Mammary epithelial cell (primary cell): ENCODE measurements at regions of chr6 and their contacts with region 1.

Region 1: DNA sequence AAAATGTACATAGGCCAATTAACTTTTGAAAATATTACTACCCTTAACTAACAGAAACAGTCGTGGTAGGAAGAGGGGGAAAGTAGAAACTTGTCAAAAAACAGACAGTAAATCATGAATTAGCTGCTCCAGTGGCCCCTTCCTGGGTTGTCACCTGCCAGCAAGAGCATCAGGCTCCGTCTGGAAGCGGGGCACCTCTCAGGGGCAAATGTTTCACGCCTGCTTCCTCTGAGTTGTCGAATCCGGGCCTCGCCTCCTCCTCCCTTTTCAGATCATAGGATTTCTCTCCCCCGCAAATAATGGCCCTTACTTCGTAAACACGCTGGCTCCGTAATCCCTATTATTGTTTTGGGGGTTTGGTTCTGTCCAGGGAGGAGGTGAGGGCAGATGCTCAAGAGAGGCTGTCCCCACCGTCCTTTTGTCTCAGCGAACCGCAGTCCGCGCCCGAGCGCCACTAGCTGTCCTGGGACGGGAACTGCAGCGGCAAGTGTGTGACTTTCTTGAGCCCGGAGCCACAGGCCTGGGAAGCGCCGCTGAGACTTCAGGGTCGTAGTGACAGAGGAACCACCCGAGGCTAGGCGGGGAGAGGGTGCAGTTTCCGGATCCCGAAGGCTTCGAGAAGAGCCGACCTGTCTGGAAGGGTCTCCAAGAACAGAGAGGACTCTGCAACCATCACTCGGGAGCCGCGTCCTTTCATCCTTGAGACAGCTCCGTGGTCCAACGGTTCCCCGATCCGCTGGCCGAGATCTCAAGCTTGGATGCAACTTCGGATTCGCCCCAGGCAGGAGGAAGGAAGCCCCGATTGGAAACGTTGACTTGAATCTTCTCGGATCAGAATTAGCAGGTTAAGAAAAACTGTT is 214.5 kb upstream of the ZNF184 start:
- DNase-seq: peak; percentile 76
- H3K4me3 ChIP-seq: peak overlapping the region; percentile 65 to 67 (median 66)
- H3K27ac ChIP-seq: no peak overlapping the region
- H3K4me1 ChIP-seq: peaks cover 5% of the 10 kb centered on the region
- H3K27me3 ChIP-seq: no peaks in the 10 kb centered on the region
- CTCF ChIP-seq: peak; percentile 72 to 83

Region 2: DNA sequence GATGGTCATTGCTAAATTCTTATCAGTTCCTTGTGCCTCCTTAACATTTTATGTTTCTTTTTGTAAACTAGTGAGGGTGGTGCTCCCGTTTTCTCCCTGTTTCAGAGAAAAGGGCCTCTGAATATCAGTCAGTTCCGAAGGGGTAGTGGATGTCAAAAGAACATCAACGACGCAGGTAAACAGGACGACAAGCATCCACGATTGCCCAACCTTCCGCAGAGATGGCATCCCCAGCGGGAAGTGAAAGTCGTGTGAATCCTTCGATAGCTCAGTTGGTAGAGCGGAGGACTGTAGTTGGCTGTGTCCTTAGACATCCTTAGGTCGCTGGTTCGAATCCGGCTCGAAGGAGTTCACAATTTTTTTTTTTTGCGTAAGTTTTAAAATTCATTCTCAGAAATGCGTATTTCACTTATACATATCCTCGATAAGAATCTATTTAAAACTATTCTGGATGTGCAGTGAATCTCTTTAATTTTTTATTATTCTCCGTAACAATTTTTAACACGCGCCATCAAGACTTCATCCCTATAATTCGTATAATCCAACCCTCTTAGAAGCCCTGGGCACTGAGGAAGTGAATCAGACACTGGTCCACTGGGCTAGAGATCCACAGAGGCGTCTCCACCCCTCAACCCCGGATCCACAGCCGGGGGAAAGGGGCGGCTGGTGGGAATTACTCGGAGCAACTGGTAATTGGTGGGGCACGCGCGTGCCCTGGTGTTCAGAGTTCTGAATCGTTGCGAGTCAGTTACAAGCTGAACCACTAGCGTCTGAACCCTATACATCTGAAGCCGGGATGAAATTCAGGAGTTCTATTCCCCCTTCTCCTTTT is 1118.6 kb before region 1 on chr6:
- CTCF ChIA-PET with region 1: no interaction called
- dilution Hi-C with region 1: no loop called
- in situ Hi-C with region 1: no loop called
- intact Hi-C with region 1: loop called (anchors 10 kb)
- DNase-seq: peak; percentile 85
- H3K4me3 ChIP-seq: peak overlapping the region; percentile 62 to 73 (median 71)
- H3K27ac ChIP-seq: no peak overlapping the region
- H3K4me1 ChIP-seq: no peaks in the 10 kb centered on the region
- H3K27me3 ChIP-seq: no peaks in the 10 kb centered on the region
- CTCF ChIP-seq: peak in 1 of 2 donors; percentile 27

Region 3: DNA sequence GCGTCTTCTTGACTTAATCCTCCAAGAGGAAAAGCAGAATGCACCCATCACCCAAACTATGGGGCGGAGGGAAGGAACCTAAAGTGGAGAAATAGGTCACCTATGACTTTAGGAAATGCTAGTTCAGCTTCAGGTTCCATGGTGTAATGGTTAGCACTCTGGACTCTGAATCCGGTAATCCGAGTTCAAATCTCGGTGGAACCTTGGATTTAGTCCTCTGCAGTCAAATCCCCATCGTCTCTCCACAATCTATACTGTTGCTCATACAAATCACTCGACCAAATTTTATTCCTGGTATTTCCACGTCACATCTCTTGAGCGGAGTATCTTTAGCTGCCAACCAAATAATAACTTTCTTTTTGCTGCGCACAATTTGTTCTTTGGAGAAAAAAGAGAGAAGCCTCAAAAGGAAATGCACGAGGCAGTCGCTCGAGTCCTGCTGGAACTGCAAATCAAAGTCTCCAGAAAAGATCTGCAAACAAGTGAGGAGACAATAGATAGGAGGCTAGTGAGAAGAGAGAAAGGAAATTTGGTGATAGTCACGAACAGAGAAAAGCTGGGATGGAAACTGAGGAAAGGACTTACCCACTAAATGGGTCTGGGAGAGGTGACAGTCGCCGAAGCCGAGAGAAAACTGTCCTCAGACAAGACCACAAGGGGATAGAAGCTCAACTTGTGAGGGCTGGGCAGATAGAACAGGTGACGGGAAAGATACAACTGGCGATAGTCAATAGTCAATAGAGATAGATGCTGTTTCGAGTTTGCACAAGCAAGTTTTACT is 391.9 kb before region 1 on chr6:
- CTCF ChIA-PET with region 1: no interaction called
- dilution Hi-C with region 1: no loop called
- in situ Hi-C with region 1: no loop called
- intact Hi-C with region 1: loop called (anchors 5 kb)
- DNase-seq: peak; percentile 82
- H3K4me3 ChIP-seq: peak overlapping the region; percentile 54 to 77 (median 63)
- H3K27ac ChIP-seq: no peak overlapping the region
- H3K4me1 ChIP-seq: peaks cover 4% of the 10 kb centered on the region
- H3K27me3 ChIP-seq: no peaks in the 10 kb centered on the region
- CTCF ChIP-seq: no peak

Region 4: DNA sequence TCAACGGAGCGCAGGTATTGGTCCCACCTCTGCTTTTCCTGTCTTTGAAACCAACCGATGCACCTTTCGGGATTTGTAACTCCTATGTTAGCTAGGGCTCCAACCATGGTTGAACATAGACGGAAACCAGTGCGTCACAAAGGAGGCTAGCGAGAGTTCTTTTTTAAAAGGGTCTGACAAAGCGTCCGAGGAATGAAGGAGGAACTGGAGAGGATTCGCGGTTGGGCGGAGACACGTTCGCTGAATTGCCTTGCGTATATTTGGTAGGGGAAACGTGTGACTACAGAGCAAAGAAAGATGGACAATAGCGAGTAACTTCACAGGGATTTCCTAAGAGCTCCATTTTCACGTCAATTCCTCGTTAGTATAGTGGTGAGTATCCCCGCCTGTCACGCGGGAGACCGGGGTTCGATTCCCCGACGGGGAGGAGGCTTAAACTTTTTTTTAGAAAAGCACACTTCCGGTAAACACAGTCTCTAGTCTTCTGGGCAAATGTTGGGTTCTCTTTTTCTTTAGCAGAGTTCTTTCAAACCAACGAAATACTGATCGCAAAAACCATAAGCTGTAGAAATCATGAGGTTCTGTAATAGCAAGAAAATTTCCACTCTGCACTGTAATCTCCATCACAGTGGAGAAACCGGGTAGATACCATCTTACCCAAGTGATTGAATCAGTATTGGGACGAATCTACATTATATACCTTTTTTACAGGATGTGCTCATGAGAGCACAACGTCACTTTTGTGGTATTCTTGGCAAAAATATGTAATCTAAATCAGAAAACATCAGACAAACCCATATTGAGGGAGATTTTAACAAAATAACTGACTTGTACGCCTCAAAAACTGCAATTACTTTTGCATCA is 207.8 kb before region 1 on chr6:
- CTCF ChIA-PET with region 1: no interaction called
- dilution Hi-C with region 1: no loop called
- in situ Hi-C with region 1: no loop called
- intact Hi-C with region 1: loop called (anchors 1 kb)
- DNase-seq: peak; percentile 89
- H3K4me3 ChIP-seq: peak overlapping the region; percentile 62 to 79 (median 76)
- H3K27ac ChIP-seq: peak overlapping the region; percentile 90
- H3K4me1 ChIP-seq: peaks cover 5% of the 10 kb centered on the region
- H3K27me3 ChIP-seq: no peaks in the 10 kb centered on the region
- CTCF ChIP-seq: no peak

Region 5: GRCh38 chr6:27518881-27519795 is 168.2 kb before region 1 on chr6:
- CTCF ChIA-PET with region 1: no interaction called
- dilution Hi-C with region 1: no loop called
- in situ Hi-C with region 1: no loop called
- intact Hi-C with region 1: loop called (anchors 2 kb)
- DNase-seq: peak; percentile 86
- H3K4me3 ChIP-seq: peak overlapping the region; percentile 45 to 67 (median 55)
- H3K27ac ChIP-seq: peak overlapping the region; percentile 52
- H3K4me1 ChIP-seq: peaks cover 15% of the 10 kb centered on the region
- H3K27me3 ChIP-seq: peaks cover 3% of the 10 kb centered on the region
- CTCF ChIP-seq: peak; percentile 76 to 77

Region 6: GRCh38 chr6:27650620-27651370 is 36.6 kb before region 1 on chr6:
- CTCF ChIA-PET with region 1: no interaction called
- dilution Hi-C with region 1: no loop called
- in situ Hi-C with region 1: no loop called
- intact Hi-C with region 1: no loop called
- DNase-seq: peak; percentile 74
- H3K4me3 ChIP-seq: peak overlapping the region; percentile 15 to 47 (median 47)
- H3K27ac ChIP-seq: no peak overlapping the region
- H3K4me1 ChIP-seq: peaks cover 2% of the 10 kb centered on the region
- H3K27me3 ChIP-seq: no peaks in the 10 kb centered on the region
- CTCF ChIP-seq: peak; percentile 32 to 54

Region 7: GRCh38 chr6:27672113-27672799 is 15.1 kb before region 1 on chr6:
- CTCF ChIA-PET with region 1: no interaction called
- dilution Hi-C with region 1: no loop called
- in situ Hi-C with region 1: no loop called
- intact Hi-C with region 1: loop called (anchors 1 kb)
- DNase-seq: peak; percentile 74
- H3K4me3 ChIP-seq: peak overlapping the region; percentile 32 to 46 (median 41)
- H3K27ac ChIP-seq: no peak overlapping the region
- H3K4me1 ChIP-seq: peaks cover 20% of the 10 kb centered on the region
- H3K27me3 ChIP-seq: no peaks in the 10 kb centered on the region
- CTCF ChIP-seq: no peak

Region 8: DNA sequence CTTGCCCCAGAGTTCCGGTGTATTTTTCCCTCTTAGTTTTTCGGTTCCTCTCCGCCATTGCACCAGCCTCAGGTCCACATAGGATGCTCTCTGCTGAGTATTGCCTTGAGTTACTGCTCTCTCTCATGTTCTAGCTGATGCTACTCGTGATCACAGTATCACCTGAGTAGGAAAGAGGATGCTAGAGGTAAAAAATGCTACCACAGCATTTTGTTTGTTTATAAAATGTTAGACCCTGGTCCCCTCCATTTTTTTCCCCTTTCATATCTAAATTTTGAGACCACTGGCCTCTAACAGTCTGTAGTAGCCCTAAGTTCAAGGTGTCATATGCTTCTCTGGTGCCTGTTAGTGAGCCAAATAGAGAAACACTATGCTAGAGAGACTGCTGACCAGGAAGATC is 49.3 kb after region 1 on chr6:
- CTCF ChIA-PET with region 1: no interaction called
- dilution Hi-C with region 1: no loop called
- in situ Hi-C with region 1: no loop called
- intact Hi-C with region 1: no loop called
- DNase-seq: no peak
- H3K4me3 ChIP-seq: no peak overlapping the region
- H3K27ac ChIP-seq: no peak overlapping the region
- H3K4me1 ChIP-seq: no peaks in the 10 kb centered on the region
- H3K27me3 ChIP-seq: no peaks in the 10 kb centered on the region
- CTCF ChIP-seq: no peak

Region 9: GRCh38 chr6:27758491-27758890 is 71.1 kb after region 1 on chr6:
- CTCF ChIA-PET with region 1: no interaction called
- dilution Hi-C with region 1: no loop called
- in situ Hi-C with region 1: no loop called
- intact Hi-C with region 1: no loop called
- DNase-seq: no peak
- H3K4me3 ChIP-seq: no peak overlapping the region
- H3K27ac ChIP-seq: no peak overlapping the region
- H3K4me1 ChIP-seq: peaks cover 7% of the 10 kb centered on the region
- H3K27me3 ChIP-seq: no peaks in the 10 kb centered on the region
- CTCF ChIP-seq: no peak

Region 10: GRCh38 chr6:27795697-27796494 is 108.5 kb after region 1 on chr6:
- CTCF ChIA-PET with region 1: interaction called, 4 read pairs
- dilution Hi-C with region 1: no loop called
- in situ Hi-C with region 1: no loop called
- intact Hi-C with region 1: loop called (anchors 1 kb)
- DNase-seq: peak; percentile 83
- H3K4me3 ChIP-seq: no peak overlapping the region
- H3K27ac ChIP-seq: no peak overlapping the region
- H3K4me1 ChIP-seq: peaks cover 8% of the 10 kb centered on the region
- H3K27me3 ChIP-seq: no peaks in the 10 kb centered on the region
- CTCF ChIP-seq: peak; percentile 74 to 87